Left lung (tissue), 14 donors: ENCODE measurements at regions of chrX and their contacts with region 1.

Region 1: DNA sequence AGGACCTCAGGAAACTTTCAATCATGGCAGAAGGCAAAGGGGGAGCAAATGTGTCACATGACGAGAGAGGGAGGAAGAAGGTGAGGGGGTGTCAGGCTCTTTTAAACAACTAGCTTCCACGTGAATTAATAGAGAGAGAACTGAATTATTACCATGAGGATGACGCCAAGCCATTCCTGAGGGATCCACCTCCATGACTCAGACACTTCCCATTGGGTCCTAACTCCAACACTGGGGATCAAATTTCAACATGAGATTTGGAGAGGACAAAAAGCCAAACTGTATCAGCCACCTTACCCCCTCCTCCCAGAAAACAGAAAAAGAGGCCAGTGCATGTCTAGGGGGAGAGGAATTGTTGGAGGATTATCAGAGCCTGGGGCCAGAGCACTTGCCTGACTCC is 40.4 kb upstream of the LAS1L start:
- DNase-seq: no peak
- ATAC-seq: no peak
- H3K4me3 ChIP-seq: no peak overlapping the region
- H3K27ac ChIP-seq: no peak overlapping the region
- H3K4me1 ChIP-seq: no peaks in the 10 kb centered on the region
- H3K27me3 ChIP-seq: no peaks in the 10 kb centered on the region
- CTCF ChIP-seq: no peak

Region 2: GRCh38 chrX:65187408-65187807 is 387.6 kb before region 1 on chrX:
- intact Hi-C with region 1: no loop called
- DNase-seq: no peak
- ATAC-seq: no peak
- H3K4me3 ChIP-seq: no peak overlapping the region
- H3K27ac ChIP-seq: no peak overlapping the region
- H3K4me1 ChIP-seq: no peaks in the 10 kb centered on the region
- H3K27me3 ChIP-seq: no peaks in the 10 kb centered on the region
- CTCF ChIP-seq: no peak

Region 3: DNA sequence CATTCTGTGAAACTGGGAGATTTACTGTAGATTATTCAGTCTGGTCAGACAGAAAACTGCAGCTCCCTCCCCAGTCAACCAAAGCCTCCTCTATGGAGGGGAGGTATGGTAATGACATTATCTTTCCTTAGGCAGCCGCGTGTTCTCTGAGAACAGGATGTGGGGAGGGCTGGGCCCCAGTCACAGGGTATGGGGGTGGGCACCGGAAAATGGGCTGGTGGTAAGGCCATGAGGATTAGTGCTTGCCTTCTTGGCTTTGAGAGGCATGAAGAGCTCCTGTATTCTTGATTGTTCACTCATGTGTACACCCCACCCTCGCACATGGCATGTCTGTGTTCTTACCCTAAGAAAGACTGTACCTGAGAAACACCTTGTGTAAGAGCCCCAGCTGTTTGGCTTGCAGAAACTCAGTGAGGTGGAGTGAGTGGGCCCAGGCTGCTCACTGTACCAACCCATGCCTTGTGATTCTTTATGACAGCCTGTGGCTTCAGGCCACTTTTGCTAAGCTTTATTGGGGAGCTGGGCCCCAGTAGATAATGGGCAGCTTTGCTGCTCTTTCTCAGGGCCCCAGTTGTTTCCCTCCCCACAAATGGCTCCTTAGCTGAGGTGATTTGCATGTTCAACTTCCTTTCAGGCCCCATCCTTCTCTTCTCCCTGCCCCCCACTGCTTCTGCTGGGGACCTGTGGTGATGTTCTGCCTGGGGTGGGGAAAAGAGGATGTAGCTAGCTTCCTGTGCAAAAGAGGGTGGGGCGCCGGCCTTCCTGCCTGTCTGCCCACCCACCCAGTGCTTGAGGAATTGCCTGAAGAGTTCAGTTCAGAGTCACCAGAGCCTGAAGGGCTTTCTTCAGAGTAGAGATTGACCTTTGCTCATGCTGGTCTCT is 123.1 kb after region 1 on chrX:
- intact Hi-C with region 1: no loop called
- DNase-seq: peak in 2 of 4 donors; percentile 76 to 81
- ATAC-seq: peak; percentile 62
- H3K4me3 ChIP-seq: no peak overlapping the region
- H3K27ac ChIP-seq: peak overlapping the region; percentile 82 to 88
- H3K4me1 ChIP-seq: peaks cover 16 to 94% of the 10 kb centered on the region in 2 donors
- H3K27me3 ChIP-seq: no peaks in the 10 kb centered on the region
- CTCF ChIP-seq: no peak

Region 4: GRCh38 chrX:65985922-65986588 is 411.0 kb after region 1 on chrX:
- intact Hi-C with region 1: loop called in 1 of 2 experiments (anchors 5 kb)
- DNase-seq: peak in 3 of 4 donors; percentile 23 to 48 (median 45)
- ATAC-seq: peak; percentile 99
- H3K4me3 ChIP-seq: no peak overlapping the region
- H3K27ac ChIP-seq: peak overlapping the region in 1 of 2 donors; percentile 72
- H3K4me1 ChIP-seq: peaks cover 0 to 23% of the 10 kb centered on the region in 2 donors
- H3K27me3 ChIP-seq: peaks cover 0 to 17% of the 10 kb centered on the region in 2 donors
- CTCF ChIP-seq: peak; percentile 52 to 57